Posterior cingulate gyrus (tissue), 11 donors: ENCODE measurements at regions of chr12 and their contacts with region 1.

Region 1: DNA sequence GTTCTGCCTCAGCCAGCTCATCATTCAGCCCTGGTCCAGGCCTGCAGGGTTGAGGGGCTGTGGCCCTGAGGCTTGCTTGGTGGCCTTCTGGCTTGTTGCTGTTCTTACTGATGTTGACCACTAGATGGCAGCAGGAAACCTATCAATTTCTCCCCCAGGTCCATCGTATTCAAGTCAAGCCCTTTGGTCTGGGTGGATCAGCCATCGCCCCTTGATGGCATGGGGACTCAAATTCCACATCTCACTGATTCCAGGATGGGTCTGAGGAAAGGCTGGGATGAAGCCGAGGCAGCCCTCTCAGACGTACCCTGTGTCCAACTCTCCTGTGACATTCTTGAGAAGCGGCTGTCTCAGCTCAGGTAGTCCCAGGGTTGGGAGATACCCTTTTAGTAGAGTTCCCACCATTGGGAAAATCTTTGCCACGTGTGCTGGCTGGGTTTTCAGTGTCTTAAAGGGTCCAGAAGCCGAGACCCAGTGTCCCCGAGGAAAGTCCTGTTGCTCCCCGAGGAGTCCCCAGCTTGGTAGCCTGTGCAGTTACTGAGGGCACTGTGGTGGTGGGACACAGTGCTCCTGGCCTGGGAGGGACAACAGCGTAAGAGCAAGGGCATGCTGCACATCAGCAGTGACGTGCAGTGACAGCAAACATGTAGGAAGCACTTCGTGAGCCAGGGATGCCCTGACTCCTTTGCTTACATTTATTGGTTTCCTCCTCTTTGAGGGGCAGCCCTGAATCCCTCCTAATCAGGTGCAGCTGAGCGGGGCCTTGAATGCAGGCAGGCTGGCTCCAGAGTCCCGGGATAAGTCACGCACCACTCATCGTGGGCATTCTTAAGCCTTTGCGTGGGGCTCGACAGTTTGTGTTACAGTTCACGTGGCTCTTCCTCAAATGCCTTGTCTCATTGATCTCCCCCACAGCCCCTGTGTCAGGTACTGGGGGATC is 58.6 kb downstream of the TSPAN9 start:
- DNase-seq: peak in 5 of 10 donors; percentile 28 to 83 (median 47)

Region 2: DNA sequence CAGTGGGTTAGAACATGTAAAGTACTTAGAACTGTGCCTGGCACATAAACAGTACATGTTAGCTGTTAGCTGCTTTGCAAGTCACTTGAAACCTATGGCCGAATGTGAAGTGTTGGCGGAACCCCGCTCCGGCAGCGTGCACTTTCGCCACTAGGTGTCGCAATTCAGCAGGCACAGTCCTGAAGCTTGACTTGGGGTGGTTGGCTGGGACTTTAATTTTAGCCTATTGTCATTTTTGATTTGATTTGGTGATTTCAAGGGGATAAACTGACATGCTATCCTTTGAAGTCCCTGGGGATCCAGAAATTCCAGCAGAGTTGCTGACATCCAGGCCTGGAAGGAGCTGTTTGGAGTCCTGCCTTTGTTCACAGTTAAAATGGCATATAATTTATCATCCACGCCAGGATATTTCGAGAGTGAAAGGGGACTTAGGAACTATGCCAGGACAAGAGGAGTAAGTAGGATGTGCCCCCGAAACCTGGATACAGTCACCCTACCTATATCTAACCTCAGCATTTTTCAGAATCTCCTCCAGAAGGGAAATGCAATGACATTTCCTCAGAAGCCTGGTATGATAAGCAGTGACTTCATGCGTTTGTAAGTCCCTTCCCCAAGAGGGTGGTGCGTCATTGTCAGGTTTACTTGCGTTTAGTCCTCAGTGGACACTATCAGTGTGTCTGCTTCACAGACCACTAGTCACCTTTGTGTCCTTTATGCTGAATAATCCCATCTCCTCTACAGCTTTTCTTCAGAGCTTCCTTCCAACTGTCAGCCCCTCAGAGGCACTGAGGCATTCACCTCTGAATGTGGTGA is 62.1 kb before region 1 on chr12:
- intact Hi-C with region 1: loop called (anchors 5 kb)
- DNase-seq: peak; percentile 74 to 98 (median 88)

Region 3: GRCh38 chr12:3097186-3097804 is 38.5 kb before region 1 on chr12:
- intact Hi-C with region 1: no loop called
- DNase-seq: peak in 2 of 10 donors; percentile 48 to 84

Region 4: DNA sequence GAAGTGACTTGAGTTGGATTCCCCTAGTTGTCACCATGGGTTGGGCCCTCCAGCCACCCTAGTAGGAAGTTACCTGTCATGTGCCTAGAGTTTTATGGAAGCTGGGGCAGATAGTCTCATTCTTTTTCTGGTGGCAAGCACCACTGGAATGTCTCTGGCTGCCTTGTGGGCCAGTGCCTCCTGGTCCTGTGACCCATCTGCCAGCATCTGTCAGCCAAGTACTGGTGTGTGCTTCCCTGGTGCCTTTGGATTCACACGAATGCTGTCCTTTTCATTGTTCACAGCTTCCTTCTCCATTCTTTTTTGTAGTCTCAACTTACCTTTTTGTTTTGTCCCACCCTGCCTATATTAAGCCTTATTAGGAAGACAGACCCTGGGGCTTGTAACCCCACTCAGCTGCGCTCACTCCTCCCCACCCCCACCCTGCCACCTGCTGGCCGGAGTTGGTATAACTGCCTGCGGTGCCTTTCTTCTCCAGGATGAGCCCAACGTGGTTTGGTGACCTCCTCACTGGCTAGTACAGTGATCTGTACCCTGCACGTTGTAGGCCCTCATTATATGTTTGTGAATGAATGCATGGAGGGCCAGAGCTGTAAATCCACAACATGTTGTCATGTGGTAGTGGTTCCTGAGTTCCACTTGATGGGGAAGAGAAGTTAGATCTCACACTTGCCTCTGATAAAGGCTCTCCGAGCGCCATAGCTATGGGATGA is 67.1 kb after region 1 on chr12:
- intact Hi-C with region 1: loop called (anchors 5 kb)
- DNase-seq: peak in 8 of 10 donors; percentile 32 to 82 (median 59)

Region 5: GRCh38 chr12:3275171-3276041 is 139.6 kb after region 1 on chr12:
- intact Hi-C with region 1: loop called (anchors 1 kb)
- DNase-seq: peak; percentile 55 to 97 (median 82)

Region 6: GRCh38 chr12:3803865-3804472 is 668.2 kb after region 1 on chr12:
- intact Hi-C with region 1: loop called (anchors 10 kb)
- DNase-seq: peak; percentile 49 to 95 (median 76)